Activated T-helper 2 cell treated with anti-CD3 and anti-CD28 coated beads, Interferon-gamma antibody, Interleukin-2, Interleukin-4, amounts not matched to agents 10 μg/mL and 5 μg/mL and 100 μg/mL, durations not matched to agents 14 hours and 24 hours and 36 hours (primary cell): ENCODE measurements at regions of chr15 and their contacts with region 1.

Region 1: DNA sequence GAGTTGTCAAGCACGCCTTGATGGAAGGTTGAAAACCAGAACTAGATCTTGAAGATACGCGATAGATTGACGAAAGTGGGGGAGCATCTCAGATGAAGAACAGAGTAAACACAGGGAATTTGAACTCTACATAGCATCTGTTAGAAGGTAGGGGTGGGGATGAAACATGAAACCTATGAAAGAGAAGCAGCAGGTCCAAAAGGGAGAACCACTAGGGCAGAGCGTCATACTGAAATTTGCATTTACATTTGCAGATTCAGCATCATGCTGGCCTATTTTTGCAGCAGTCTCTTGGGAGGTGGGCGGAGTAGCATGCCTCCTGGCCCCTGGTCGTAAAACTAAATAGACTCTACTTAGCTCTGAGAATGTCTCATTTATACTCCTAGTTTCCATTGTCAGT is 46.1 kb upstream of the RASGRP1 start:
- DNase-seq: peak; percentile 38
- H3K4me3 Mint-ChIP-seq: peak overlapping the region; percentile 15
- H3K27ac Mint-ChIP-seq: peak overlapping the region; percentile 96
- H3K4me1 Mint-ChIP-seq: peaks cover 72% of the 10 kb centered on the region
- H3K27me3 Mint-ChIP-seq: no peaks in the 10 kb centered on the region

Region 2: GRCh38 chr15:38438031-38438986 is 172.4 kb before region 1 on chr15:
- intact Hi-C with region 1: no loop called
- DNase-seq: no peak
- H3K4me3 Mint-ChIP-seq: no peak overlapping the region
- H3K27ac Mint-ChIP-seq: no peak overlapping the region
- H3K4me1 Mint-ChIP-seq: peaks cover 8% of the 10 kb centered on the region
- H3K27me3 Mint-ChIP-seq: peaks cover 52% of the 10 kb centered on the region

Region 3: DNA sequence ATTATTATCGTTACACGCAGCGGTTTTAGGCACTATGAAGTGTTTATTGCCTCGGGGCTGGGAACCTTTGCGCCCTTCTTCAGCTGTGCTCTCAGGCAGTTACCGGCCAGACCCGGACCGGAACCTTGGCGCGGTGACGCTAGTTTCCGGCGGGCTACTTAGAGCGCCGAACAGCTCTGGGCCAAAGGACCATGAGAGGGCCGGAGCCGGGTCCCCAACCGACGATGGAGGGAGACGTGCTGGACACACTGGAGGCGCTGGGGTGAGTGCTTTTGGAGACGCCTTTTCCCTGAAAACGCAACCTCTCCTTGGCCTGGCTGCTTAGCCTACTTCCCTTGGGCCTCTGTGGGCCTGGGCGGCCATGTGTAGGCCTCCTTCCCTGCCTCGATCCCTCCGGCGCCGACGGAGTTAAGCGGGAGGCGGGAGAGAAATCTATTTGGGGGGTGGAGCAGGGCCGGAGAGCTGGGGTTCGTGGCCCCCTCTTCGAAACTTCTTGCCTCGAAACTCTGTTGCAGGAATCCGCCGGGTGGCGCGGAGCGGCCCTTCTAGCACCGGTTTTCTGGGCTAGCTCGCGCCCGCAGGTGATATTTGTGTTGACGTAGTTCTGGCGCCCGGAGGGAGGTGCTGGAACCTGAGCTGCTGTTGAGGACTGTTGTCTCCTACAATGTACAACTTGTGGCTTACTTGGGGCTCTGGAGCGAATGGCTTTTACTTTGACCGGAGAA is 156.6 kb before region 1 on chr15 and contains the start of gene FAM98B:
- intact Hi-C with region 1: loop called (anchors 5 kb)
- DNase-seq: peak; percentile 84
- H3K4me3 Mint-ChIP-seq: peak within 1 kb of the TSS; percentile 87
- H3K27ac Mint-ChIP-seq: peak within 1 kb of the TSS; percentile 91
- H3K4me1 Mint-ChIP-seq: peaks cover 19% of the 10 kb centered on the region
- H3K27me3 Mint-ChIP-seq: peaks cover 24% of the 10 kb centered on the region
- total RNA-seq, gene FAM98B: 53.9 and 56.5 TPM in 2 replicates

Region 4: GRCh38 chr15:38631126-38632075 is 20.7 kb after region 1 on chr15:
- intact Hi-C with region 1: loop called (anchors 1 kb)
- DNase-seq: no peak
- H3K4me3 Mint-ChIP-seq: peak overlapping the region; percentile 11
- H3K27ac Mint-ChIP-seq: peak overlapping the region; percentile 85
- H3K4me1 Mint-ChIP-seq: peaks cover 49% of the 10 kb centered on the region
- H3K27me3 Mint-ChIP-seq: no peaks in the 10 kb centered on the region

Region 5: GRCh38 chr15:38651328-38652038 is 40.7 kb after region 1 on chr15:
- intact Hi-C with region 1: loop called (anchors 1 kb)
- DNase-seq: peak; percentile 56
- H3K4me3 Mint-ChIP-seq: peak overlapping the region; percentile 75
- H3K27ac Mint-ChIP-seq: peak overlapping the region; percentile 96
- H3K4me1 Mint-ChIP-seq: peaks cover 77% of the 10 kb centered on the region
- H3K27me3 Mint-ChIP-seq: no peaks in the 10 kb centered on the region